Transverse colon (tissue), 4 donors: ENCODE measurements at regions of chrX and their contacts with region 1.

Region 1: GRCh38 chrX:31658360-31658759 is 586.5 kb upstream of the FTHL17 start:
- DNase-seq: no peak
- H3K4me3 ChIP-seq: no peak overlapping the region
- H3K27ac ChIP-seq: no peak overlapping the region
- H3K4me1 ChIP-seq: no peaks in the 10 kb centered on the region
- H3K27me3 ChIP-seq: no peaks in the 10 kb centered on the region
- CTCF ChIP-seq: peak; percentile 26 to 43 (median 36)
- EP300 ChIP-seq: no peak
- POLR2A ChIP-seq: no peak

Region 2: DNA sequence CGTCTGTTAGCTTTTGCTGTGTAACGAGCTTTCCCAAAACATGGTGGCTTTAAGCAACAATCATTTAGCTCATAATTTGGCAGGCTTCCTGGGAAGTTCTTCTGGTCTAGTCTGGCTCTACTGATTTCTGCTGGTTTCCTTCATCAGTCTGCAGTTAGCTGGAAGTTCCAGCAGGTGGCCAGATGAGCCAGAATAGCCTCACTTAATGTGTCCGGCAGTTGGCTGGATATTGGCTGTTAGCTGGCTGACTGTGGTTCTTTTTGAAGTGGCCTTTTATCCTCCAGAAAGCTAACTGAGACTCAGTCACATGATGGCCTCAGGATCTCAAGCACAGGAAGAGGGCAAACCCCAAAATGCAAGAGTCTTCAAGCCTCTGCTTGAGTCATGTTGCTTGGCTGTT is 621.5 kb before region 1 on chrX:
- in situ Hi-C with region 1: loop called (anchors 10 to 25 kb)
- intact Hi-C with region 1: no loop called
- DNase-seq: peak; percentile 30
- H3K4me3 ChIP-seq: no peak overlapping the region
- H3K27ac ChIP-seq: no peak overlapping the region
- H3K4me1 ChIP-seq: no peaks in the 10 kb centered on the region
- H3K27me3 ChIP-seq: no peaks in the 10 kb centered on the region
- CTCF ChIP-seq: peak; percentile 42 to 61 (median 48)
- EP300 ChIP-seq: no peak
- POLR2A ChIP-seq: no peak

Region 3: DNA sequence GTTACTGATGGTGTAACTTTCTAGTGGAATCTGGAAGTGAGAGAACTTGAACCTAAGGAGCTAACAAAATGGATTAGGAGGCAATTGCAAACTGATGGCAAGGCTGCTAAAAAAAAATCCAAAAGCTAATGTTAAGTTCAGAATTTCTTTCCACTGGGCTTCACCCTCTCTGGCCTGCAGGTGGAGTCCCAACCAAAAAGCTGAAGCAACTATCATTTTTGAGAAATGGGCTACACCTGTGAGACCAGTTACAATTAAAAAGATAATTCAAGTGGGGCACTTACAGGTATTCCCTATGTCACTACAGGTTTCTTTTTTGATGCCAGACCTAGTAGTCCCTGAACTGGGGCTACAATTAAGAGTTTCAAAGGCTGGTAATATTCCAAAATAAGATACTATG is 444.4 kb before region 1 on chrX:
- in situ Hi-C with region 1: loop called in 1 of 4 experiments (anchors 10 kb)
- intact Hi-C with region 1: no loop called
- DNase-seq: no peak
- H3K4me3 ChIP-seq: no peak overlapping the region
- H3K27ac ChIP-seq: no peak overlapping the region
- H3K4me1 ChIP-seq: no peaks in the 10 kb centered on the region
- H3K27me3 ChIP-seq: no peaks in the 10 kb centered on the region
- CTCF ChIP-seq: peak in 4 of 5 experiments; percentile 21 to 35 (median 30)
- EP300 ChIP-seq: no peak
- POLR2A ChIP-seq: no peak

Region 4: DNA sequence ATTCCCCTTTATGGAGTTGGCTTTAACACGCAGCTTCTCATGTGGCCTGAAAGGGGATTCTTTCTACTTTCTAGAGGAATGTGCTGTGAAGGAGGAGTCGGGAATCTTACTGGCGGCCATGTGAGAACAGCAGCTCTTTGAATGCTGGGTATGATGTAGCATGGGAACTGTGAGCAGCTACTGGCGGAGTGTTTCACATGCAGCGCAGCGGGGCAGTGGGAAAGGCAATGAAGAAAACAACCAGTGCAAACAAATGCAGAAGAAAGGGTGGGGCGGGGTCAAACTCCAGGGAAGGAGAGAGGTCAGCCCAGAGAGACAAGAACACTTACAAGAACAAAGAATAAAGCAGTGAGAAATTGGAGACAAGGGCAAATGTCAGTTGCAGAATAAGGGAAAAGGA is 222.8 kb before region 1 on chrX:
- in situ Hi-C with region 1: loop called in 1 of 4 experiments (anchors 25 kb)
- intact Hi-C with region 1: no loop called
- DNase-seq: peak; percentile 70
- H3K4me3 ChIP-seq: no peak overlapping the region
- H3K27ac ChIP-seq: no peak overlapping the region
- H3K4me1 ChIP-seq: peaks cover 0 to 7% (median 0%) of the 10 kb centered on the region in 4 donors
- H3K27me3 ChIP-seq: no peaks in the 10 kb centered on the region
- CTCF ChIP-seq: no peak
- EP300 ChIP-seq: no peak
- POLR2A ChIP-seq: no peak

Region 5: DNA sequence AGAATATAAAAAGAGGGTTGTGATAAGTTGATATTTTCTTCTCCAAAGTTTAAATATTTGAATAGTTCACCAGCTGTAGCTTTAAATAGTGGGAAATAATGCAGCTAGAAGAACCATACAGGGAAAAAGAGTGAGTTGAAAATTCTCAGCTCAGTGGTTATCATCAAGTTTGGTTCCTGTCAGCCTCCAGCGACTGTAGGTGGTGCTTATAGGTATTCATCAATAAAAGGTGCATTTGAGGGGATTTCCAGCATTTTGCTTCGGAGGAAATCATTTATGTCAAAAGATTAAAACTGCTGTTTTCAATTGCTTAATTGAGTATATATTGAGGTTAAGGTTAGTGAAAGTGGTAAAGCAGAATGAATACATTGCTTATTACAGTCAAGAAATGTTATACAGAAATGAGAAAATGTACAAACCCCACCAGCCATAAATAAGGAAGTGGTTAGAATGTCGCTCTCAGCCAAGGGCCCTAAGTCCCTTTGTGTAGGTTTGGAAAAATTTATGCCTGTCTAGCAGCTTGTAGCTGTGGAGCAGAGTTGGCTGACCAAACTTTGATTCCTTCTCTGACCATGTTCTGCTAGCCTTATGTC is 53.6 kb before region 1 on chrX:
- in situ Hi-C with region 1: no loop called
- intact Hi-C with region 1: loop called (anchors 2 kb)
- DNase-seq: no peak
- H3K4me3 ChIP-seq: no peak overlapping the region
- H3K27ac ChIP-seq: no peak overlapping the region
- H3K4me1 ChIP-seq: no peaks in the 10 kb centered on the region
- H3K27me3 ChIP-seq: no peaks in the 10 kb centered on the region
- CTCF ChIP-seq: no peak
- EP300 ChIP-seq: no peak
- POLR2A ChIP-seq: no peak

Region 6: GRCh38 chrX:31619653-31620052 is 38.7 kb before region 1 on chrX:
- in situ Hi-C with region 1: no loop called
- intact Hi-C with region 1: no loop called
- DNase-seq: no peak
- H3K4me3 ChIP-seq: no peak overlapping the region
- H3K27ac ChIP-seq: no peak overlapping the region
- H3K4me1 ChIP-seq: no peaks in the 10 kb centered on the region
- H3K27me3 ChIP-seq: no peaks in the 10 kb centered on the region
- CTCF ChIP-seq: no peak
- EP300 ChIP-seq: no peak
- POLR2A ChIP-seq: no peak

Region 7: DNA sequence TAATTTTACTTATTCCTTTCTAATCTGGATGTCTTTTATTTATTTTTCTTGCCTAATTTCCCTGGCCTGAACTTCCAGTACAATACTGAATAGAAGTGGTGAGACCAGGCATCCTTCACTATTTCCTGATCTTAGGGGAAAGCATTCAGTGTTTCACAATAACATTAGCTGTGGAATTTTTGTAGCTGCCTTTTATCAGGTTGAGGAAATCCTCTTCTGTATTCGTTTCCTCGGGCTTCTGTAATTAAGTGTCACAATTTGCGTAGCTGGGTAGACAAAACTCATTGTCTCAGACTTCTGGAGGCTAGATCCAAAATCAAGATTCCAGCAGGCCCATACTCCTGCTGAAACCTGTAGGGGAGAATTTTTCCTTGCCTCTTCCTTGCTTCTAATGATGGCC is 11.9 kb after region 1 on chrX:
- in situ Hi-C with region 1: no loop called
- intact Hi-C with region 1: no loop called
- DNase-seq: no peak
- H3K4me3 ChIP-seq: no peak overlapping the region
- H3K27ac ChIP-seq: no peak overlapping the region
- H3K4me1 ChIP-seq: no peaks in the 10 kb centered on the region
- H3K27me3 ChIP-seq: no peaks in the 10 kb centered on the region
- CTCF ChIP-seq: no peak
- EP300 ChIP-seq: no peak
- POLR2A ChIP-seq: no peak

Region 8: GRCh38 chrX:31761886-31762285 is 103.5 kb after region 1 on chrX:
- in situ Hi-C with region 1: loop called in 1 of 4 experiments (anchors 25 kb)
- intact Hi-C with region 1: no loop called
- DNase-seq: no peak
- H3K4me3 ChIP-seq: no peak overlapping the region
- H3K27ac ChIP-seq: no peak overlapping the region
- H3K4me1 ChIP-seq: no peaks in the 10 kb centered on the region
- H3K27me3 ChIP-seq: no peaks in the 10 kb centered on the region
- CTCF ChIP-seq: no peak
- EP300 ChIP-seq: no peak
- POLR2A ChIP-seq: no peak

Region 9: GRCh38 chrX:32195611-32196010 is 537.3 kb after region 1 on chrX:
- in situ Hi-C with region 1: no loop called
- intact Hi-C with region 1: no loop called
- DNase-seq: no peak
- H3K4me3 ChIP-seq: no peak overlapping the region
- H3K27ac ChIP-seq: no peak overlapping the region
- H3K4me1 ChIP-seq: no peaks in the 10 kb centered on the region
- H3K27me3 ChIP-seq: no peaks in the 10 kb centered on the region
- CTCF ChIP-seq: no peak
- EP300 ChIP-seq: no peak
- POLR2A ChIP-seq: no peak

Region 10: GRCh38 chrX:32582729-32583128 is 924.4 kb after region 1 on chrX:
- in situ Hi-C with region 1: no loop called
- intact Hi-C with region 1: no loop called
- DNase-seq: no peak
- H3K4me3 ChIP-seq: no peak overlapping the region
- H3K27ac ChIP-seq: no peak overlapping the region
- H3K4me1 ChIP-seq: no peaks in the 10 kb centered on the region
- H3K27me3 ChIP-seq: no peaks in the 10 kb centered on the region
- CTCF ChIP-seq: no peak
- EP300 ChIP-seq: no peak
- POLR2A ChIP-seq: no peak